PC-9 (cell line): ENCODE measurements at regions of chr7 and their contacts with region 1.

Region 1: GRCh38 chr7:54839538-54840213 is 80.7 kb upstream of the SEC61G start:
- DNase-seq: peak; percentile 91 to 95
- H3K4me3 ChIP-seq: 0 out of 2 replicates have a peak overlapping the region, but pooled peaks have one; percentile 2
- H3K27ac ChIP-seq: peak overlapping the region; percentile 51
- H3K4me1 ChIP-seq: peaks cover 48% of the 10 kb centered on the region
- H3K27me3 ChIP-seq: no peaks in the 10 kb centered on the region
- CTCF ChIP-seq: peak; percentile 100

Region 2: GRCh38 chr7:54705436-54705835 is 134.2 kb before region 1 on chr7:
- CTCF ChIA-PET with region 1: no interaction called
- POLR2A ChIA-PET with region 1: no interaction called
- intact Hi-C with region 1: no loop called
- DNase-seq: peak; percentile 65 to 81
- H3K4me3 ChIP-seq: no peak overlapping the region
- H3K27ac ChIP-seq: no peak overlapping the region
- H3K4me1 ChIP-seq: no peaks in the 10 kb centered on the region
- H3K27me3 ChIP-seq: peaks cover 26% of the 10 kb centered on the region; the same call in 1 of the 2 replicates
- CTCF ChIP-seq: no peak

Region 3: GRCh38 chr7:54773472-54774399 is 65.9 kb before region 1 on chr7:
- CTCF ChIA-PET with region 1: interaction called, 5 read pairs
- POLR2A ChIA-PET with region 1: no interaction called
- intact Hi-C with region 1: loop called (anchors 1 kb)
- DNase-seq: peak; percentile 94
- H3K4me3 ChIP-seq: peak overlapping the region; percentile 58
- H3K27ac ChIP-seq: peak overlapping the region; percentile 67
- H3K4me1 ChIP-seq: peaks cover 20% of the 10 kb centered on the region
- H3K27me3 ChIP-seq: no peaks in the 10 kb centered on the region
- CTCF ChIP-seq: peak; percentile 100

Region 4: DNA sequence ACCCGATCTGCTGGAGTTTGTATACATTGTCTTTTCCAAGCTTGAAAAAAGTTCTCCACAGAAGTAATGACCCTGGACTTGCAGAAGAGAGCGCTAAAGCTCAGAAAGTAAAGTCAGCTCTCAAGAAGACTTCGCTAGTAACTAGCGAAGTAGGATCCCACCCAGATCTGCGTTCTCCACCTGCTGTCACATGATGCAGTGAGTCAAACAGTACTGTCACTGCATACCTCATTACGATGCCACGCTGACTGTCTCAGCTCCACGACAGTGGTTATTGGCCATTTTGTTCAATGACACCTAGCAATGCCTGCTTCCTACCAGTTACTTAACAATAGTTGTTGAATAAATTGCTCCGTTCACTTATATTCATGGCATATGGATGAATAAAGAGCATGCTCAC is 51.0 kb before region 1 on chr7:
- CTCF ChIA-PET with region 1: interaction called, 31 read pairs
- POLR2A ChIA-PET with region 1: no interaction called
- intact Hi-C with region 1: loop called (anchors 1 kb)
- DNase-seq: peak; percentile 79 to 99
- H3K4me3 ChIP-seq: no peak overlapping the region
- H3K27ac ChIP-seq: peak overlapping the region; percentile 27
- H3K4me1 ChIP-seq: peaks cover 29% of the 10 kb centered on the region
- H3K27me3 ChIP-seq: no peaks in the 10 kb centered on the region
- CTCF ChIP-seq: peak; percentile 95

Region 5: GRCh38 chr7:55120481-55121198 is 281.0 kb after region 1 on chr7:
- CTCF ChIA-PET with region 1: no interaction called
- POLR2A ChIA-PET with region 1: no interaction called
- intact Hi-C with region 1: no loop called
- DNase-seq: peak; percentile 71 to 98
- H3K4me3 ChIP-seq: peak overlapping the region; percentile 3; the same call in 1 of the 2 replicates
- H3K27ac ChIP-seq: peak overlapping the region; percentile 79
- H3K4me1 ChIP-seq: peaks cover 77% of the 10 kb centered on the region
- H3K27me3 ChIP-seq: no peaks in the 10 kb centered on the region
- CTCF ChIP-seq: no peak